Naive thymus-derived CD4-positive, alpha-beta T cell (primary cell): ENCODE measurements at regions of chr7 and their contacts with region 1.

Region 1: GRCh38 chr7:148862481-148862880 is 21.6 kb downstream of the EZH2 start:
- DNase-seq: no peak
- ATAC-seq: no peak
- H3K4me3 ChIP-seq: no peak overlapping the region
- H3K4me3 Mint-ChIP-seq: no peak overlapping the region
- H3K27ac ChIP-seq: no peak overlapping the region
- H3K27ac Mint-ChIP-seq: no peak overlapping the region
- H3K4me1 ChIP-seq: peaks cover 0 to 4% of the 10 kb centered on the region in 2 donors
- H3K4me1 Mint-ChIP-seq: peaks cover 7 to 46% (median 21%) of the 10 kb centered on the region in 7 donors
- H3K27me3 ChIP-seq: no peaks in the 10 kb centered on the region
- H3K27me3 Mint-ChIP-seq: no peaks in the 10 kb centered on the region

Region 2: GRCh38 chr7:148877517-148877916 is 15.0 kb after region 1 on chr7:
- CTCF ChIA-PET with region 1: interaction called, 7 read pairs
- POLR2A ChIA-PET with region 1: interaction called, 4 read pairs
- intact Hi-C with region 1: loop called in 1 of 2 experiments (anchors 2 kb)
- DNase-seq: no peak
- ATAC-seq: no peak
- H3K4me3 ChIP-seq: no peak overlapping the region
- H3K4me3 Mint-ChIP-seq: peak overlapping the region in 1 of 10 donors; percentile 12
- H3K27ac ChIP-seq: no peak overlapping the region
- H3K27ac Mint-ChIP-seq: peak overlapping the region in 1 of 9 donors; percentile 5
- H3K4me1 ChIP-seq: peaks cover 3 to 7% of the 10 kb centered on the region in 2 donors
- H3K4me1 Mint-ChIP-seq: peaks cover 5 to 65% (median 24%) of the 10 kb centered on the region in 7 donors
- H3K27me3 ChIP-seq: no peaks in the 10 kb centered on the region
- H3K27me3 Mint-ChIP-seq: no peaks in the 10 kb centered on the region